Uterus (tissue), 4 donors: ENCODE measurements at regions of chr2 and their contacts with region 1.

Region 1: DNA sequence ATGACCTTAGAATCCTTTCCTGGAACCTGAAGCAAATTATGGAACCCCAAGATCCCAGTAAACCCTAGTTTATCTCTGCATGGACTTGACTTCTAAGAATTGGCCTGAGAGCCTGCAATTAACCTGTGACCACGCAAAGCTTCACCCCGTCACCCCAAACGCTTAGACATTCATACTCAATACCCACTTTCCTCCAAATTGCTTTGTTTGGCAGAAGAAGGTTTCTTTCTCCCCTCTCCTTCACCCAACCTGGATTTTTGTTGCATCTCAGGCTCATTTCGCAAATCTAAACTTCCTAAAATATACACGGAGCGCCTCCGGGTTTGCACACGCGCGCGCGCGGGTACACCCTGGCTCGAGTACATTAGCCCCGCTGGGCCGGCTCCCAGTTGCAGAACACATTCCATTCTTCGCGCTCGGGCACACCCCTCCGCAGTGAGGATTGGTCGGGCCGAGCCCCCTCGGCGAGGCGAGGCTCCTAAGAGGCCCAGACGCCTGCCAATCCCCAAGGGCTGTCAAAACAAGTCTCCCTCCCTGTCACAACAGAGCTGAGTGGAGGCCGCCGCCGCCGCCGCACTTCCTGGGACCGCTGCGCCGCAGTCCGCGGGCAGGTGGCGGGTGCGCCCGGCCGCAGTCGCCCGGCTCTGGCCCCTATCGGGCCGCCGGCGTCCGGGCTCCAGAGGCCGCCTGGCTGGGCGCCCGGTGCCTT is at the start of gene PLCL1:
- DNase-seq: peak; percentile 88 to 90
- H3K4me3 ChIP-seq: peak within 1 kb of the TSS; percentile 44 to 92
- H3K27ac ChIP-seq: peak within 1 kb of the TSS; percentile 66 to 76
- H3K4me1 ChIP-seq: no peaks in the 10 kb centered on the region
- H3K27me3 ChIP-seq: no peaks in the 10 kb centered on the region
- CTCF ChIP-seq: peak in 2 of 4 experiments; percentile 8 to 24
- POLR2A ChIP-seq: peak; percentile 59 to 90
- total RNA-seq, gene PLCL1: 7.3 to 32.5 (median 15.0) TPM

Region 2: DNA sequence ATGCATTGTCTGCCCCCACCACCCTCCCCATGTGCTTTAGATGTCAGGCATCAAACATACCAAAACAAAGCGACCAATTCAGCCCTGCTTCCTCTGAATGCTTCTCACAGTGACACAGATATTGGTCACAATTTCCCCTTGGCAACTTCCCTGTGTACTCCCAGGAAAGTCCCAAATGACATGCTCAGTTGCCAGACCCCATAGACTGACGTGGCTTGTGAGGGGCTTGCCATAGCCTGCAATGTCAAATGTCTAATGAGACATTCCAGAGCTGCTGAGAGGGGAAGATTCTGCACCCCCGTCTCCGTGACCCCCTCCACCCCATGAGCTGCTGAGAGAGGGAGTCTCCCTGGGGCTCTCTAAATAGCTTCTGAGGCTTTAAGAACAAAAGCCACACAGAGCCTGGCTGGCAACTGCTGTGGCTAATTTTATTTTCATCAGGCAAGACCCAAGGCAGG is 176.1 kb before region 1 on chr2:
- intact Hi-C with region 1: no loop called
- DNase-seq: no peak
- H3K4me3 ChIP-seq: no peak overlapping the region
- H3K27ac ChIP-seq: no peak overlapping the region
- H3K4me1 ChIP-seq: no peaks in the 10 kb centered on the region
- H3K27me3 ChIP-seq: no peaks in the 10 kb centered on the region
- CTCF ChIP-seq: no peak
- POLR2A ChIP-seq: no peak

Region 3: DNA sequence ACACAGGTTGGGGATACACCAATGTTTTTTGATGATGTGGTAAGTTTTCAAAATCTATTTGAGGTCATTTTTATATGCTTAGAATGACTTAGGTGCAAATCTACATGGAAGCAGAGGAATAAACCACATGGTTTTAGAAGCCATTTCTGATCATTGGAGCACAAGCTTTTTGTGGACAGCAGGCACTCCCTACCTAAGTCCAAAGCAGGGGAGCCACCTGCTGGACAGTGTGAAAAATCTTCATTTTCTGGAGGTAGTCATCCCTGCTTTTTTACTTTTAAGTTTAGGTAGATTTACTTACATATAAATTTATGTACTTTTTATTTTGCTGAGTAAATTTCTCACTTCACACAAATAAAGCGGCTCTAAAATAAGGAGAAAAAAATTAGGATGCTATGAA is 323.4 kb after region 1 on chr2:
- intact Hi-C with region 1: loop called (anchors 5 kb)
- DNase-seq: peak; percentile 19 to 21
- H3K4me3 ChIP-seq: no peak overlapping the region
- H3K27ac ChIP-seq: no peak overlapping the region
- H3K4me1 ChIP-seq: no peaks in the 10 kb centered on the region
- H3K27me3 ChIP-seq: no peaks in the 10 kb centered on the region
- CTCF ChIP-seq: peak; percentile 37 to 51 (median 44)
- POLR2A ChIP-seq: no peak

Region 4: DNA sequence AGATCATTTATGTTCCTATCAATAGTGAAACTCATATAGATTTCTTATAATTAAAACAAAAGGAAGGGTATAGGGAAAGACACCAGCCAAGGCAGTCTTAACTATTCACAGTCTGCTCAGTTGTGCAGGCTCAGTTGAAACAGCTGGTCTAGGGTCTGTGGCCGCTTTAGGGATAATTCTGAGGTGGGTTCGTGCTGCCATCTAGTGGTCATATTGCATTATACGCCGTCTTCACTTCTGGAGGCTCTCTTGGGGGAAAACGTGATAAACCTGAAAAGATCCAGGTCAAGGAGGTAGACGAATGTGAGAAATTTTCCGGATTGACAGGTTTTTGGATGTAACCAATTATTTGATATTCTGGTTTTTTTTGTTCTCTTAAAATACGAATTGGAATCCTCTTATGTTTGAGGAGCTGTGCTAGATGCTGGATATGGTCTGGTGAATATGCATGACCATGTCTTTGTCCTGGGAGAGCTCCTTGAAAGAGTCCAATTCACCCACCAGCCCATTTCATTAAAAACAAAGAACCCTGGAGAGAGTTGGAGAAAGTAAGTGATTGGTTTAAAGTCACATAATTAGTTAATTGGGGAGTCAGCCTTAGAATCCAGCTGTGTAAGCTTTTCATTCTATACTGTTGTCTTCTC is 492.6 kb after region 1 on chr2:
- intact Hi-C with region 1: loop called (anchors 5 kb)
- DNase-seq: peak; percentile 48 to 50
- H3K4me3 ChIP-seq: no peak overlapping the region
- H3K27ac ChIP-seq: no peak overlapping the region
- H3K4me1 ChIP-seq: no peaks in the 10 kb centered on the region
- H3K27me3 ChIP-seq: no peaks in the 10 kb centered on the region
- CTCF ChIP-seq: peak; percentile 67 to 85 (median 76)
- POLR2A ChIP-seq: no peak